Cardiac septum (tissue), 1 donor: ENCODE measurements at regions of chr9 and their contacts with region 1.

Region 1: GRCh38 chr9:33623658-33624586 is 99.9 kb downstream of the ANKRD18B start:
- DNase-seq: no peak

Region 2: GRCh38 chr9:33721674-33722358 is 97.9 kb after region 1 on chr9:
- intact Hi-C with region 1: loop called (anchors 1 kb)
- DNase-seq: peak; percentile 93

Region 3: GRCh38 chr9:33776578-33776977 is 152.7 kb after region 1 on chr9:
- intact Hi-C with region 1: no loop called
- DNase-seq: no peak